ENCODE measurements at regions of chr10 and their contacts with region 1.

Region 1: GRCh38 chr10:32459051-32459698 is 13.2 kb downstream of the CCDC7 start:
- DNase-seq: peak; percentile 13 to 89 (median 55)
- ATAC-seq: peak; percentile 97
- H3K4me3 ChIP-seq: peak overlapping the region in 1 of 2 experiments; percentile 31
- H3K4me3 Mint-ChIP-seq: peak overlapping the region; percentile 44
- H3K27ac ChIP-seq: peak overlapping the region; percentile 28 to 40
- H3K27ac Mint-ChIP-seq: peak overlapping the region; percentile 88
- H3K4me1 ChIP-seq: peaks cover 41% of the 10 kb centered on the region
- H3K4me1 Mint-ChIP-seq: peaks cover 49% of the 10 kb centered on the region
- H3K27me3 ChIP-seq: no peaks in the 10 kb centered on the region
- H3K27me3 Mint-ChIP-seq: no peaks in the 10 kb centered on the region
- CTCF ChIP-seq: no peak

Region 2: DNA sequence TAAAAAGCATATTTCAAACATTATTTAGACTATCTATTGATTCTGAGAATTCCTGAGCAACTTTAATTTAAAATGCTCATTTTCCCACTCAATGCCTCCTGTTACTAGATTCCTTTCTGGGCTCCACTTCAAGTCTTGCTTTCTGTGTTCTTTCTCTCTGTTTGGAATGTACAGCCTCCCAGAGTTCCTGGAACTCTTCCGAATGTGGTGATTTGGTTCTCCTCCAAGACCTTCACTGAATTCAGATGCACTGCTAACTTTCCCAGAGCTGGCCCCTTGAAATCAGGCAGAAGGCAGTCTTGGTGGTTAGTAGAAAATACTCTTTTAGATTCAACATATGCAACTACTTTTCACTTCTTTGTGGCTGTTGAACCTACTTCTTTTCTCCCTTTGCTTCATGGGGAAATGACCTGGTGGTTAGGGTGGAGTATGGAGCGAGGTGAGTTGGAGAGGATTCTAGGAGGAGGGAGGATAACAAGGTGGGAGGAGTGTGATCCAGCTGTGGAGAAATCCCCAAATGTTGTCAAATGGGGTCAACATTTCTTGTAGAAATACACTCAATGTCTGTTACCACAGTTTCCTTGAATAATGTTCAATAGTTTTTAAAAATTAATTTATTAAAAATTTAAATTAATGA is 41.1 kb before region 1 on chr10:
- CTCF ChIA-PET with region 1: no interaction called
- POLR2A ChIA-PET with region 1: no interaction called
- intact Hi-C with region 1: no loop called
- DNase-seq: no peak
- ATAC-seq: no peak
- H3K4me3 ChIP-seq: no peak overlapping the region
- H3K4me3 Mint-ChIP-seq: no peak overlapping the region
- H3K27ac ChIP-seq: no peak overlapping the region
- H3K27ac Mint-ChIP-seq: no peak overlapping the region
- H3K4me1 ChIP-seq: no peaks in the 10 kb centered on the region
- H3K4me1 Mint-ChIP-seq: peaks cover 3% of the 10 kb centered on the region
- H3K27me3 ChIP-seq: no peaks in the 10 kb centered on the region
- H3K27me3 Mint-ChIP-seq: no peaks in the 10 kb centered on the region
- CTCF ChIP-seq: no peak

Region 3: DNA sequence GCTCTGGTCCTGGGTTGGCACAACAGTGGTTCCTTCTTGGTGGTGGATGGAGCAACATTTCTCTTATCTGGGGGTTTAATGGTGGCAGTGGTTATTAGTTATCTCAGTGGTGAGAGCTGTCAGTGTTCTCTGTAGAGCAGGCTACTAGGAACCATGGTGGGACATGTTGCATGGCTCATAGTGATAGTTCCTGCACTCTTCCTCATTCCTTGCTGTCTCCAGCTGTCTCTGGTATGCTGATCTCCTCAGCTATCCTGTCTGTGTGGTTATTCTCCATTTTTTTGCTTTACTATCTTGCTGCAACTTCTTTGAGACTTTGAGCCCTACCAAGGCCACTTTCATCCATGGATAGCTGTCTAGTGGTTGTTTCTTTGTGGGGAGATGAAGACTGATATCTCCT is 30.7 kb after region 1 on chr10:
- CTCF ChIA-PET with region 1: no interaction called
- POLR2A ChIA-PET with region 1: no interaction called
- intact Hi-C with region 1: loop called in 1 of 2 experiments (anchors 5 kb)
- DNase-seq: no peak
- ATAC-seq: no peak
- H3K4me3 ChIP-seq: no peak overlapping the region
- H3K4me3 Mint-ChIP-seq: no peak overlapping the region
- H3K27ac ChIP-seq: no peak overlapping the region
- H3K27ac Mint-ChIP-seq: peak overlapping the region; percentile 16
- H3K4me1 ChIP-seq: no peaks in the 10 kb centered on the region
- H3K4me1 Mint-ChIP-seq: peaks cover 20% of the 10 kb centered on the region
- H3K27me3 ChIP-seq: no peaks in the 10 kb centered on the region
- H3K27me3 Mint-ChIP-seq: no peaks in the 10 kb centered on the region
- CTCF ChIP-seq: no peak

Region 4: DNA sequence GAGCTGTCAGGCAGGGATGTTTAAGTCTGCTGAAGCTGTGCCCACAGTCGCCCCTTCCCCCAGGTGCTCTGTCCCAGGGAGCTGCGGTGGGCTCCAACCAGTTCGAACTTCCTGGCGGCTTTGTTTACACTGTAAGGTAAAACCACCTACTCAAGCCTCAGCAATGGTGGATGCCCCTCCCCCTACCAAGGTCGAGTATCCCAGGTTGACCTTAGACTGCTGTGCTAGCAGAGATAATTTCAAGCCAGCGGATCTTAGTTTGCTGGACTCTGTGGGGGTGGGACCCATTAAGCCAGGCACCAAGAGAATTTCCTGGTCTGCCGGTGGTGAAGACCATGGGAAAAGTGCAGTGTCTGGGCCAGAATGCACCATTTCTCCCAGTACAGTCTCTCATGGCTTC is 42.7 kb after region 1 on chr10:
- CTCF ChIA-PET with region 1: no interaction called
- POLR2A ChIA-PET with region 1: no interaction called
- intact Hi-C with region 1: loop called in 1 of 2 experiments (anchors 1 kb)
- DNase-seq: no peak
- ATAC-seq: no peak
- H3K4me3 ChIP-seq: no peak overlapping the region
- H3K4me3 Mint-ChIP-seq: no peak overlapping the region
- H3K27ac ChIP-seq: no peak overlapping the region
- H3K27ac Mint-ChIP-seq: no peak overlapping the region
- H3K4me1 ChIP-seq: no peaks in the 10 kb centered on the region
- H3K4me1 Mint-ChIP-seq: peaks cover 11% of the 10 kb centered on the region
- H3K27me3 ChIP-seq: no peaks in the 10 kb centered on the region
- H3K27me3 Mint-ChIP-seq: no peaks in the 10 kb centered on the region
- CTCF ChIP-seq: no peak

Measured in CD8-positive, alpha-beta T cell (primary cell).